GM10248 (cell line): ENCODE measurements at regions of chr7 and their contacts with region 1.

Region 1: GRCh38 chr7:43582503-43583423 is at the start of gene STK17A:
- DNase-seq: peak; percentile 94
- CTCF ChIP-seq: peak; percentile 99

Region 2: DNA sequence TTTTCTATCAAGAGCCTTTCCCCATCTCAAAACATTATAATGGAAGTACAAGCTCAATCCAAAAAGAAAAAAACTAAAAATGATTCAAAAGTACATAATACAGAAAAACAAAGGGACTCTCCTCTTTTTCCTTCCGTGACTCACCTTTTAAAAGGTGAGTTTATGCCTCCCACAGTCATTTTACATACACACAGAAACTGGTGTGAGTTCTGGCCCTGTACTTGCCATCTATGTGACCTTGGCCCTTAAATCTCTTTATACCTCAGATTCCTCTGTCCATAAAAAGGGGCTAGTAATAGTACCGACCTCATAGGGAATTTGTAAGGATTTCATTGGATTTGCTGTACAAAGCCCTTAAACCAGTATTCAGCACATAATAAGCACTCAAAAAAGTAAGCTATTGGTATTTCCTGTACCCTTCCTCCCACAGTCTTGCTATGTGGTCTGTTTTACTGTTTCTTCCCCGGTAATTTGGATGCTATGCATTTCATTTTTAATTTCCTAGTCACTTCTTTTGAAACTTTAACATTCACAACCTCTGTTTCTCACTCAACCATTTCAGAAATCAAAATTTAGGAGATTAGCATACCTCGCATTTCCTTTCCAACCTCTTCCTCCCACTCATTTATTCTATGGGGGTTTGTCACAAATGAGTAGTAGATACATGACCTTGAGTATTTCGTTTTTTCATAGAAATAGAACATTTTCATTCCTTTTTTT is 39.1 kb after region 1 on chr7:
- CTCF ChIA-PET with region 1: interaction called, 39 read pairs
- POLR2A ChIA-PET with region 1: interaction called, 4 read pairs
- DNase-seq: no peak
- CTCF ChIP-seq: no peak

Region 3: DNA sequence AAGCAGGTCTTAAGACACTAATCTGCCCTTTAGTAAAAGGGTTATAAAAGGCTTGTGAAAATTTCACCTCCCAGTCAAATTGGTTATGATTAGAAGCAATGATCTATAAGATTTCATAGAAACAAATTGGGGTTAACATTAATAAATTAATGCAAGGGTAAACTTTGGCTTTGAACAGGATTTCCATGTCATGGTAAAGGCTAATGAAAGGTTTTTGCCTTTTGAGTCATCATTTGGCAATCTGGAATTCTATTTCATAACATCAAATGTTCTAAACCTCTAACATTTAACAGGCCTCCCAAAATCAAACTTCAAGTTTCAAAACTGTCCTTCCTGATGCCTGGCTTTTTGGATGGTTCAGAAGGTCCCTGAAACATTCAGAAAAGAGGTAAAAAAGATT is 84.2 kb after region 1 on chr7:
- CTCF ChIA-PET with region 1: interaction called, 19 read pairs
- POLR2A ChIA-PET with region 1: interaction called, 3 read pairs
- DNase-seq: no peak
- CTCF ChIP-seq: no peak

Region 4: GRCh38 chr7:43711503-43711902 is 128.7 kb after region 1 on chr7:
- CTCF ChIA-PET with region 1: interaction called, 124 read pairs
- POLR2A ChIA-PET with region 1: interaction called, 7 read pairs
- DNase-seq: no peak
- CTCF ChIP-seq: no peak

Region 5: DNA sequence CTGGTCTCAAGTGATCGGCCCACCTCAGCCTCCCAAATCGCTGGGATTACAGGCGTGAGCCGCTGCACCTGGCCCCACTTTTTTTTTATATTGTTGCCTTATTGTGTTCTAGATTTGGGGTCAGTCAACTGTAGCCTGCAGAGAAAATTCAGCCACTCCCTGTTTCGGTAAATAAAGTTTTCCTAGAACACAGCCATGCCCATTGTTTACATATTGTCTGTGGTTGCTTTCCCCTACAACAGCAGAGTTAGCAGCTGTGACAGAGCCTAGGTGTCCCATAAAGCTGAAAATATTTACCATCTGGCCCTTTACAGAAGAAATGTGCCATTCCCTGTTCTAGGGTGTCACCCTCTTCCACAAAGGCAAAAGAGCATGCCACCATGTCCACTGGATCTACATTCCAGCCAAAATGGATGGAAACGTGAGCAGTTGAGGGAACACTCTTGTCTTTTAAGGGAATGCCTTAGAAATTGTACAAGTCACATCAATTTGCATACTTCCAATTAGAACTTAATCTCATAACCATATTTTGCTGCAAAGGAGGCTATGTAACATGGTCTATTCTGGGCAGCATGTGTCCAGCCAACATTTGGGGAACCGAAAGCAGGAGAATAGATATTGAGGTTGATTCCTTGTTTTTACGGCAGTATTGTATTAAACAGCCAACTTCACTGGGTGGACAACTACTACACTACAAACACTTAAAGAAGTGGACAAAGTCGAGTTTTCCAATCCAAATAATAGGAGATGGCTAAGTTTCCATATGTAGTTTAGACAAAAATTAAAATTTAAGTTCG is 164.7 kb after region 1 on chr7:
- CTCF ChIA-PET with region 1: interaction called, 13 read pairs
- POLR2A ChIA-PET with region 1: interaction called, 4 read pairs
- DNase-seq: no peak
- CTCF ChIP-seq: no peak

Region 6: DNA sequence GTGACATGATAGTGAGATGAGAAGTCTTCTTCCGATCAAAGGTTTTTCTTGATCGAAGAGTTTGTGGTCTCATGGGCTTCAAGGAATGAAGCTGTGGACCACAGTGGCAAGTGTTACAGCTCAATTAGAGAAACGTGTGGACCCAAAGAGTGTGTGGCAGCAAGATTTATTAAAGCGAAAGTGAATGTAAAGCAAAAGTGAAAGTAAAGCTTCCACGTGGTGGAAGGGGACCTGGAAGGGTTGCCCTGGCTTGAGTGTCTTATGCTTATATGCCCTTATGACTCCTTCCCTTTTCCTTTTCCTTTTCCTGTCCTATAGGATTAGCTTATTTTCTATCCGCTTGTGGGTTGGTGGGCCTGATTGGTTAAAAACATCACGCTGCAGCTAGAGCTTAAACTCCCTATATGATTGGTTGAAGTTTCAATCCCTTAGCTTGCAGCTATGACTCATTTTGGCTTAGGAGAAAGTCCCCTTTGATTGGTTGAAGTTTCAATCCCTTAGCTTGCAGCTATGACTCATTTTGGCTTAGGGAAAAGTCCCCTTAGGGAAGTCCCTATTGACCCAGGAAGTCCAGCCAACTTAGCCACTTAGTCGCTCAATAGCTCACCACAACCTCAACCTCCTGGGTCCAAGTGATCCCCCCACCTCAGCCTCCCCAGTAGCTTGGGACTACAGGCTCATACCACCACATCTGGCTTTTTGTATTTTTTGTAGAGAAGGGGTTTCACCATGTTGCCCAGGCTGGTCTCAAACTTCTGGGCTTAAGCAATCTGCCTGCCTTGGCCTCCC is 251.9 kb after region 1 on chr7:
- CTCF ChIA-PET with region 1: interaction called, 114 read pairs
- POLR2A ChIA-PET with region 1: interaction called, 10 read pairs
- DNase-seq: no peak
- CTCF ChIP-seq: no peak